ENCODE measurements at regions of chr5 and their contacts with region 1.

Region 1: DNA sequence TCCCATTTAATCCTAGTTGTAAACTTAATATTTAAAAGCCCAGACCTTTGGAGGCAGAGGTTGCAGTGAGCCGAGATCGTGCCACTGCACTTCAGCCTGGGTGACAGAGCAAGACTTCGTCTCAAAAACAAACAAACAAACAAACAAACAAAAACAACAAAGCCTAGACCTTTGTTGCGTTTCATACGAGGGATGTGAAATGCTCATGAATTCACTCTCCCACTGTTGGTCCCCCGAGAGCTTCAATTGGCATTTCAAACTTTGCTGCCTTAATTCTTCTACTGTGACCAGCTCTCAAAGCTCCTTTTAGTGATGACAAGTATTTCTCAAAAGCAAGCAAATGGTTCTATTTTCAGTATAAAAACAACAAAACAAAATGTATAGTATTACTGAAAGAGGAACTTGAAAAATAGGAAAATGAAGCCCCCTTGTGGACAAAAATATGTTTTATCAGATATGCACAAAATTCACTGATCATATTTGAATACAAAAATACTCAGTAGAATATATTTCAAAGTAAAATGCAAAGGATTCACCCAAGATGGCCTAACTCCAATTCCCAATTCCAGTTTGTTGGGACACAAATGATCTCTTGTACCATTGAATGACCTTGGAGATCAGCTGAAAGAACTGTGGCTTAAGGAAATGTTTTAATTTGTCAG is 140.4 kb downstream of the ESM1 start:
- DNase-seq: peak in 2 of 9 experiments; percentile 59 to 70
- ATAC-seq: no peak
- H3K4me3 ChIP-seq: no peak overlapping the region
- H3K4me3 Mint-ChIP-seq: peak overlapping the region; percentile 55
- H3K27ac ChIP-seq: no peak overlapping the region
- H3K27ac Mint-ChIP-seq: peak overlapping the region; percentile 15
- H3K4me1 ChIP-seq: peaks cover 3% of the 10 kb centered on the region
- H3K4me1 Mint-ChIP-seq: peaks cover 3% of the 10 kb centered on the region
- H3K27me3 ChIP-seq: no peaks in the 10 kb centered on the region
- H3K27me3 Mint-ChIP-seq: peaks cover 9% of the 10 kb centered on the region
- CTCF ChIP-seq: peak; percentile 78

Region 2: GRCh38 chr5:54524704-54525103 is 320.3 kb before region 1 on chr5:
- CTCF ChIA-PET with region 1: interaction called, 203 read pairs
- POLR2A ChIA-PET with region 1: interaction called, 7 read pairs
- intact Hi-C with region 1: no loop called
- DNase-seq: no peak
- ATAC-seq: no peak
- H3K4me3 ChIP-seq: no peak overlapping the region
- H3K4me3 Mint-ChIP-seq: no peak overlapping the region
- H3K27ac ChIP-seq: no peak overlapping the region
- H3K27ac Mint-ChIP-seq: no peak overlapping the region
- H3K4me1 ChIP-seq: peaks cover 69% of the 10 kb centered on the region
- H3K4me1 Mint-ChIP-seq: peaks cover 18% of the 10 kb centered on the region
- H3K27me3 ChIP-seq: no peaks in the 10 kb centered on the region
- H3K27me3 Mint-ChIP-seq: no peaks in the 10 kb centered on the region
- CTCF ChIP-seq: no peak

Region 3: DNA sequence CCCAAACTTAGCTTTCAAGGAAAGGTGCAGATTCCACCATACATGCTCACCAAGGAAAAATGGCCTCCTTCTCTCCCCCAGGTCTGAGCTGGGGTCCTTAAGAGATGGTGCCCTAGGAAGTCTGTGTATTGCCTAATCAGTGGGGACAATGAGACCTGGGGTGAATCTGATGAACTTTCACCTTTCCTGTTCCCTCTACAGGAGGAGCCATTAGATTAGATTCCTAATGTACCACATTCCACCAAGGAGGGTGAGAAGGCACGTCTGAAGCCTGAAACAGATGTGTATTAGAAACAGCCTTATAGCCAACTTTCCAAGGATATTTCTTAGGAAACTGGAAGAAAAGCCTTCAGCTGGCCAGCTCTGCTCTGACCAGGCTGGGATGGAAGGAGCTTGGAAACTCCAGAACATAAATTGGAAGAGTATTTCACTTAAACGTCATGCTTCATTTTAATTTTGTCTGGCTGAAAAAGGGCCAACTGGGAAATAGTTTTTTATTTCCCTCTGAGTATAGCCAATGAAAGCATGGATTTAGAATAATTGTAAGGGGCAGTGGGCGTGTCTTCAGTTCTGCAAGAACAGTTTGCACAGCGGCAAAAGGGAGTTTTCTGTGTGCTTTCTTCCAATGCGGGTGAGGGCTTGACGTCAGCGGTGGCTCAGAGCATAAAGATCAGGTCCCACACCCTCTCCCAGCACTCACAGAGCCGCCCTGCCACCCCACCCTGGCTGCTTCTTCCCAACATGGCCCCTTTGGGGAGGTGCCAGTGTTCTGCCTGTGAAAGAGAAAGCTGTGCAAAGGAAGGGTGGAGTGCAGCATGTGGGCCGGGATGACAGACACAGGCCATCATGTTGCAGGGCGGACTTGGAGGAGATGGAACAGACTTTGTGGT is 70.5 kb before region 1 on chr5:
- CTCF ChIA-PET with region 1: interaction called, 10 read pairs
- POLR2A ChIA-PET with region 1: no interaction called
- intact Hi-C with region 1: no loop called
- DNase-seq: no peak
- ATAC-seq: no peak
- H3K4me3 ChIP-seq: no peak overlapping the region
- H3K4me3 Mint-ChIP-seq: no peak overlapping the region
- H3K27ac ChIP-seq: no peak overlapping the region
- H3K27ac Mint-ChIP-seq: no peak overlapping the region
- H3K4me1 ChIP-seq: no peaks in the 10 kb centered on the region
- H3K4me1 Mint-ChIP-seq: no peaks in the 10 kb centered on the region
- H3K27me3 ChIP-seq: no peaks in the 10 kb centered on the region
- H3K27me3 Mint-ChIP-seq: peaks cover 5% of the 10 kb centered on the region
- CTCF ChIP-seq: no peak

Region 4: DNA sequence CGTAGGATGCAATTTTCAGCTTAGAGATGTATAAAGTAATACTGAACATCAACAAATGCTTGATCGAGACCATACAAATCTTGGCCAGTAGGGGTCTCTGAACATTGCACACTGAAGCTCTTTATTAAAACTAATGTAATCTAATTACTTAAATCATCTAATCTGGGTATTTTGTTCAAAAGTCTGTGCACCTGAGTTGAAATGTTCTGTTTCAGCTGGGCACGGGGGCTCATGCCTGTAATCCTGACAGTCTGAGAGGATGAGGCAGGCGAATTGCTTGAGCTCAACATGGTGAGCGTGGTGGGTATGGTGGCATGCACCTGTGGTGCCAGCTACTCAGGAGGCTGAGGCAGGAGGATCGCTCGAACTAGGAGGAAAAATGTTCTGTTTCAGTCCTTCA is 99.3 kb after region 1 on chr5:
- CTCF ChIA-PET with region 1: no interaction called
- POLR2A ChIA-PET with region 1: no interaction called
- intact Hi-C with region 1: no loop called
- DNase-seq: peak in 8 of 9 experiments; percentile 10 to 77 (median 47)
- ATAC-seq: peak; percentile 49
- H3K4me3 ChIP-seq: no peak overlapping the region
- H3K4me3 Mint-ChIP-seq: no peak overlapping the region
- H3K27ac ChIP-seq: no peak overlapping the region
- H3K27ac Mint-ChIP-seq: no peak overlapping the region
- H3K4me1 ChIP-seq: no peaks in the 10 kb centered on the region
- H3K4me1 Mint-ChIP-seq: no peaks in the 10 kb centered on the region
- H3K27me3 ChIP-seq: no peaks in the 10 kb centered on the region
- H3K27me3 Mint-ChIP-seq: no peaks in the 10 kb centered on the region
- CTCF ChIP-seq: peak; percentile 93